ENCODE measurements at regions of chr16 and their contacts with region 1.

Region 1: GRCh38 chr16:67928561-67929364 is 2.9 kb downstream of the CTRL start:
- DNase-seq: peak; percentile 73 to 86 (median 82)
- H3K4me3 ChIP-seq: no peak overlapping the region
- H3K27ac ChIP-seq: peak overlapping the region in 50 of 59 donors; percentile 4 to 98 (median 92)
- H3K27me3 ChIP-seq: no peaks in the 10 kb centered on the region
- CTCF ChIP-seq: peak; percentile 53 to 96 (median 91)

Region 2: DNA sequence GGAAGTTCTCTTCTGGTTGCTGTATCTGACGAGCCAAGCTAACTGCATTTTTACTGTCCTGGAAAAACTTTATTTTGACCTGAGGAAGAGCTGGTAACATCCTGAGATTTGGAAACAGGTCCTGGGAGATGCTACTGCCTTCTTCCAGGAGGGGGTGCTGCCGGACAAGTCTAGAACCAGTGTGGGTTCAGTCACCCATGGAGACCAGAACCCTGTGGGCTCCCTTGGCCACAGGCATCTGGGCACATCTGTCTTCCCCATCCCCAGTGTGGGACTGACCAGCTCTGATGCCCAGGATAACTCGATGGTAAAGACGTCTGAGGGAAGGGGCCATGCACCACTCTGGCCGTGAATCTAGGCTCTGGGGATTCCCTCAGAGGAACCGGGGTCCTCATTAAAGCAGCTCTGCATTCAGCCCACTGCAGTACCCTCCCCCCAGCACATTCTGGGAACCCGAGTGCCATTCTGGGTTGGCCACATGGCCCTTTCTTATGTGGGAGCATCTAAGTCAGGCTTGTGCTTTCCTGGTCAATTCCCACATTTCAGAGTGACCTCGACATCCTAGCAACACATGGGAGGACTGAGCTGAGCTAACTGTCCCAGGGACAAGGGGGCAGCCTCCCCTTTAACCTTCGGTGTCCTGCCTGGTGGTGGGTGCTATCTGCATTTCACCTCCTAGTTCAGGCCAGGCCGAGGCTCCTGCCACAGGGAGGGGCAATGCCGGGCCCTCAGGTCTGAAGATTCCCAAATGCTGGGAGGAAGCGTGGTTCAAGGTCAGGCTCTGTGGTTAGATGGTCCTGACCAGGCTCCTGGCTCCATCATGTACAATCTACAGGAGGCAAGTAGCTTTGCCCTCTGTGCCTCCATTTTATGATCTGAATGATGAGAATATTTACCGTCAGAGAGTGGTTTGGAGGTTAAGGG is 255.8 kb before region 1 on chr16:
- intact Hi-C with region 1: loop called in 1 of 2 experiments (anchors 5 kb)
- DNase-seq: peak in 8 of 10 donors; percentile 59 to 77 (median 72)
- H3K4me3 ChIP-seq: no peak overlapping the region
- H3K27ac ChIP-seq: peak overlapping the region in 55 of 59 donors; percentile 25 to 94 (median 69)
- H3K27me3 ChIP-seq: no peaks in the 10 kb centered on the region
- CTCF ChIP-seq: peak; percentile 29 to 83 (median 72)

Region 3: GRCh38 chr16:67816240-67817031 is 112.3 kb before region 1 on chr16:
- intact Hi-C with region 1: loop called (anchors 5 kb)
- DNase-seq: peak; percentile 52 to 87 (median 70)
- H3K4me3 ChIP-seq: peak overlapping the region in 13 of 59 donors; percentile 2 to 40 (median 20)
- H3K27ac ChIP-seq: peak overlapping the region in 6 of 59 donors; percentile 9 to 62 (median 40)
- H3K27me3 ChIP-seq: no peaks in the 10 kb centered on the region
- CTCF ChIP-seq: peak; percentile 92 to 100 (median 100)

Region 4: DNA sequence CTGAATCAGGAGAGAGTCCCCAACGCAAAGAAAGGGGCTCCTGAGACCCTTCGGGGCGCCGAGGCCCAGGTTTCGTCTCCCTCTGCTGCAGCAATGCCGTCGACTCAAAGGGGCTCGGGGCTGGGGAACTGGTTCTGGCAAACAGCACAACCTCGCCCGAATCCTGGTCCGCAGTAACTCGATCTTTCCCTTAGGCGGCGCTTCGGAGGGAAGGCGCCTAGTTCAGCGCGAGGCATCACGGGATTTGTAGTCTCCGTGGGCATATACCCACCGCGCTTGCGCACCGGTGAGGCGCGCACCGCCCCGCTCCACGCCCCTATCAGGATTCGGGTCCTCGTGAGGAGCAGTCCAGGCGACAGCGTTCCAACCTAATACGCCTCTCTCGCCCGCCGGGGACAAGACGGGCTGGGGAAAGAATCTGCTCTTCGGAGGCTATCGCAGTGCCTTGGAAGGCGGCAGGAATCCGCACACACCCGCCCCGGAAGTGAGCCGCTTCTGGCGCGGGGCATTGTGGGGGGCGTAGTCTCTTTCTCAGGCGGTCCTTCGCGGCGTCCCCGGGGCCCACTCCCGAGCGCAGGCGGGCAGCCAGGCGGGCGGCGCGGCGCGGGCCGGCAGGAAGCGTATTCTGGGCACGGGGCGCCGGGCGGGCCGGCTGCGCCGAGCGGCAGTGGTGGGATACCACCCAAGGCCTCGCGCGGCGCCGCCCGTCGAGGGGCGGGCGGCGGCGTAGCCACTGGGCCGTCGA is 86.8 kb before region 1 on chr16 and contains the start of gene THAP11:
- intact Hi-C with region 1: loop called in 1 of 2 experiments (anchors 5 kb)
- DNase-seq: peak; percentile 88 to 95 (median 91)
- H3K4me3 ChIP-seq: peak within 1 kb of the TSS; percentile 73 to 100 (median 94)
- H3K27ac ChIP-seq: peak within 1 kb of the TSS; percentile 97 to 100 (median 100)
- H3K27me3 ChIP-seq: no peaks in the 10 kb centered on the region
- CTCF ChIP-seq: peak; percentile 77 to 98 (median 94)
- total RNA-seq, gene THAP11: 17.7 to 30.0 (median 24.0) TPM

Region 5: DNA sequence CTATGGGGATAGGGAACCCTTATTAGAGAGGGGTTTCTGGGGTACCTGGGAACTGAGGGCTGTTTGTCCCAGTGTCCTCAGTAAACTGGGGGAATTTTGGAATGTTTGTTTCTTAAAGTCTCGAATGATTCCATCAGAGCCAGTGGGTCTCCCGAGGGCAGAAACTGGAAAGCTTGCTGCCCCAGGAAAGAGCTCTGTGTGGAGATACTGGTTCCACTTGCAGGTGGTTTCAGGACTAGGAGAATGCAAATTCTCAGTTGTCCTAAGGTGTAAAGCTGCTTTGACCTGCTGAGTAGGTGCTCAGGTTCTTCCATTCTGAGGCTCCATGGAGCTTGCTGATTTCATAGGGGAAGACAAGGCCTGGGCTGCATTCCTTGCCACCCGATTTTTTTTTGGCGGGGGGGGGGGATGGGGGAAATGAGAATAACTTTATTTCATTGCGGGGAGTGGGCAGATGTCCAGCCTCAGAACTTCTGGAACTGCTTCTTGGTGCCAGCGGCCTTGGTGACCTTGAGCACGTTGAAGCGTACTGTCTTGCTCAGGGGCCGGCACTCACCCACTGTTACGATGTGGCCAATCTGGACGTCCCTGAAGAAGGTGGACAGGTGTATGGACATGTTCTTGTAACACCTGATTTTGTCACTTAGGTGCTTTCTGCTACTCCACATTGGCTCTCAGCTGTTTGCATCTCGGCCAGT is 73.1 kb before region 1 on chr16:
- intact Hi-C with region 1: no loop called
- DNase-seq: no peak
- H3K4me3 ChIP-seq: no peak overlapping the region
- H3K27ac ChIP-seq: peak overlapping the region in 1 of 59 donors; percentile 20
- H3K27me3 ChIP-seq: no peaks in the 10 kb centered on the region
- CTCF ChIP-seq: no peak

Region 6: GRCh38 chr16:67883872-67884261 is 44.9 kb before region 1 on chr16:
- intact Hi-C with region 1: loop called (anchors 1 to 2 kb)
- DNase-seq: peak in 9 of 10 donors; percentile 43 to 71 (median 53)
- H3K4me3 ChIP-seq: peak overlapping the region in 3 of 59 donors; percentile 4 to 55 (median 53)
- H3K27ac ChIP-seq: peak overlapping the region; percentile 9 to 98 (median 92)
- H3K27me3 ChIP-seq: no peaks in the 10 kb centered on the region
- CTCF ChIP-seq: peak; percentile 5 to 93 (median 82)

Region 7: GRCh38 chr16:67893743-67894399 is 34.9 kb before region 1 on chr16:
- intact Hi-C with region 1: no loop called
- DNase-seq: peak in 1 of 10 donors; percentile 29
- H3K4me3 ChIP-seq: peak overlapping the region; percentile 69 to 99 (median 95)
- H3K27ac ChIP-seq: peak overlapping the region in 58 of 59 donors; percentile 60 to 98 (median 91)
- H3K27me3 ChIP-seq: no peaks in the 10 kb centered on the region
- CTCF ChIP-seq: no peak

Region 8: GRCh38 chr16:67942200-67942509 is 13.4 kb after region 1 on chr16:
- intact Hi-C with region 1: no loop called
- DNase-seq: peak in 2 of 10 donors; percentile 34 to 44
- H3K4me3 ChIP-seq: no peak overlapping the region
- H3K27ac ChIP-seq: peak overlapping the region in 40 of 59 donors; percentile 1 to 97 (median 90)
- H3K27me3 ChIP-seq: no peaks in the 10 kb centered on the region
- CTCF ChIP-seq: peak in 54 of 56 donors; percentile 25 to 70 (median 58)

Region 9: DNA sequence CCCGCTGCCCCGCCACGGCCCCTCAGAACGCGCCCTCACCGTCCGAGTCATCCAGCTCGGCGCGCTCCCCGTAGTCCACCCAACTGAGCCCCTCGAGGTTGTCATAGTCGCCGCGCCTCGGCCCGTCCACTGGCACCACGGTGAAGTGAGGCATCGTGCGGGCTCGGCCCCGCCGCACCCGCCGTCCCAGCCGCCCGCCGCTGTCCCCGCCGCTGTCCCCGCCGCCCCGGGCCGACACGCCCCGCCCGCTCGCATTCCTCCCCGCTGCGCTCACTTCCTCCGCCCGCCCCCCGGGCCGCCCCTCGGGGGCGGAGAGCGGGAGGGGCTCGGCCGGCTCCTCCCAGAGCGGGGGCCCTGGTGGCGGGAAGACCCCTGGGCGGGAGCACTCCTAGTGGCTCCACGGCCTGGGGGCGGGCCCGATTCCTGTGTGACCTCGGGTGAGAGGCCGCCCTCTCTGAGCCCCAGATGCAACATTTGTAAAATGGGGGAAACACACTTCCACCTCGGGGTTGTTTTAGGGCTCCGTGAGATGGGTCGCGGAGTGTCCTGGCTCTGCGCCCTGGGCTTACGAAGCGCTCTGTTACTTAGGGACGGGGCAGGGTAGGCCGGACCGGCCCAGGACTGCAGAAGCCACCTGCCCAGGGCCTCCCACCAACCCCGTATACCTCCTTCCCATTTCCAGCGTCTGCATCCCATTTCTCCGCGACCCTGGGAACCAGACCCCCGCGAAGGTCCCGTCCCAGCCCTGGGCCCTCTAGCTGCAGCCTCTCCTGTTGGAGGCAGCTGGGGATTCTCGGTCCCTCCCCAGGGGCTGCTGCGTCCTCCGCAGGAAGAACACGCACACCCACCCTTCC is 39.9 kb after region 1 on chr16 and contains the start of gene SLC12A4:
- intact Hi-C with region 1: no loop called
- DNase-seq: peak in 6 of 10 donors; percentile 28 to 80 (median 46)
- H3K4me3 ChIP-seq: peak within 1 kb of the TSS; percentile 53 to 88 (median 72)
- H3K27ac ChIP-seq: peak within 1 kb of the TSS in 53 of 59 donors; percentile 6 to 89 (median 71)
- H3K27me3 ChIP-seq: peaks cover 0 to 19% (median 0%) of the 10 kb centered on the region in 45 donors
- CTCF ChIP-seq: peak in 4 of 56 donors; percentile 5 to 17 (median 7)
- total RNA-seq, gene SLC12A4: 12.2 to 79.2 (median 26.9) TPM